Testis (tissue), 5 donors: ENCODE measurements at regions of chr20 and their contacts with region 1.

Region 1: GRCh38 chr20:37519508-37520128 is 1.4 kb upstream of the NNAT start:
- DNase-seq: no peak
- H3K4me3 ChIP-seq: peak overlapping the region in 1 of 2 donors; percentile 47
- H3K27ac ChIP-seq: no peak overlapping the region
- H3K4me1 ChIP-seq: peaks cover 6% of the 10 kb centered on the region
- H3K27me3 ChIP-seq: no peaks in the 10 kb centered on the region
- CTCF ChIP-seq: no peak
- POLR2A ChIP-seq: no peak

Region 2: DNA sequence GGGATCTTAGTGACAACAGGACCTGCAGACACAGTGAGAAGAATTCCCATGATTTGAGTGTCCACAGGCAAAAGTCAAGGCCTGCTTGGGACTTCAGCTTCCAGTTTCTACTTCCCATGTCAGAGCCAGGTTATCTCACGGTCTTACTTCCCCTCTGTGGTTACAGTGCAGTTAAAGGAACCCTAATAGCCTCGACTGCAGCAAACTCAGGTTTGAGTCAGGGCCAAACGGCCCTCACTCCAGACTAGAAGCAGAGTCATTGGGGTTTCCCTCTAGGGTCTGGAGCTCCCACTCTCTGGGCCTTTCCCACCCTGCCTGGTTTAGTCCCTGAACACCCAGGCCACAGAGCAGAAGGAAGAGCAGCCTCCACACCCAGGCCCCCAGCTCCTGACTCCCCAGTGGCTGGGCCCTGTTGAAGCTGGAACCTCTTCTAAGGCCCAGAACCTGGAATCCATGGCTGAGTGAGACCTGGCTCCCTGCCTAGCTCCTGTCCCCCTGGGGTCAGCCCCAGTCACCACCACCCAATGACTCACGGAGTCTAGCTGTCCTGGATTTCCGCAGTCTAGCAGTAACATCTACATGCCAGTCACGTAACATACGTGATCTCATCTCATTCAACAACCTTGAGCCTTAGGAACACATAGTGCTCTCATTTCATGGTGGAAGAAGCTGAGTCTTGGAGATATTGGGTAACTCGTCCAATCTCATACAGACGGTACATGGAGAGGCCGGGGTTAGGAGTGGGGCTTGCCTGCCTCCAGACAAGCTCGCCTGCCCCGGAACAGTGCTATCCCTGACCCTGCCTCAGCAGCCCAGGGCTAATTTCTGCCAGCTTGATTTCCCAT is 248.8 kb before region 1 on chr20:
- intact Hi-C with region 1: loop called (anchors 5 kb)
- DNase-seq: no peak
- H3K4me3 ChIP-seq: no peak overlapping the region
- H3K27ac ChIP-seq: no peak overlapping the region
- H3K4me1 ChIP-seq: peaks cover 5% of the 10 kb centered on the region
- H3K27me3 ChIP-seq: no peaks in the 10 kb centered on the region
- CTCF ChIP-seq: no peak
- POLR2A ChIP-seq: no peak